HEK293T (cell line): ENCODE measurements at regions of chr4 and their contacts with region 1.

Region 1: GRCh38 chr4:133146574-133147241 is 2.4 kb upstream of the PCDH10 start:
- DNase-seq: peak; percentile 45

Region 2: GRCh38 chr4:133130171-133130570 is 16.5 kb before region 1 on chr4:
- CTCF ChIA-PET with region 1: interaction called, 10 read pairs
- POLR2A ChIA-PET with region 1: no interaction called
- DNase-seq: no peak

Region 3: DNA sequence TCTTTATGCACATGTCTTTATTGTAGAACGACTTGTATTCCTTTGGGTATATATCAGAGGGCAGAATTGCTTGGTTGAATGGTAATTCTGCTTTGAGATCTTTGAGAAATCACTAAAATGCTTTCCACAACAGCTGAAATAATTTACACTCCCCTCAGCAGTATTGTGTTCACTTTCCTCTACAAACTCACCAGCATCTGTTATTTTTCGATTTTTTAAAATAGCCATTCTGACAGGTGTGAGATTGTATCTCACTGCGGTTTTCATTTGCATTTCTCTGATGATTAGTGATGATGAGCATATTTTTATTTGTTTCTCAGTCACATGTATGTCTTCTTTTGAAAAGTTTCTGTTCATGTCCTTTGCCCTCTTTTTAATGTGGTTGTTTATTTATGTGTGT is 595.1 kb after region 1 on chr4:
- CTCF ChIA-PET with region 1: no interaction called
- POLR2A ChIA-PET with region 1: no interaction called
- DNase-seq: no peak

Region 4: GRCh38 chr4:134944115-134944514 is 1797.4 kb after region 1 on chr4:
- CTCF ChIA-PET with region 1: no interaction called
- POLR2A ChIA-PET with region 1: no interaction called
- DNase-seq: no peak